ENCODE measurements at regions of chr1 and their contacts with region 1.

Region 1: DNA sequence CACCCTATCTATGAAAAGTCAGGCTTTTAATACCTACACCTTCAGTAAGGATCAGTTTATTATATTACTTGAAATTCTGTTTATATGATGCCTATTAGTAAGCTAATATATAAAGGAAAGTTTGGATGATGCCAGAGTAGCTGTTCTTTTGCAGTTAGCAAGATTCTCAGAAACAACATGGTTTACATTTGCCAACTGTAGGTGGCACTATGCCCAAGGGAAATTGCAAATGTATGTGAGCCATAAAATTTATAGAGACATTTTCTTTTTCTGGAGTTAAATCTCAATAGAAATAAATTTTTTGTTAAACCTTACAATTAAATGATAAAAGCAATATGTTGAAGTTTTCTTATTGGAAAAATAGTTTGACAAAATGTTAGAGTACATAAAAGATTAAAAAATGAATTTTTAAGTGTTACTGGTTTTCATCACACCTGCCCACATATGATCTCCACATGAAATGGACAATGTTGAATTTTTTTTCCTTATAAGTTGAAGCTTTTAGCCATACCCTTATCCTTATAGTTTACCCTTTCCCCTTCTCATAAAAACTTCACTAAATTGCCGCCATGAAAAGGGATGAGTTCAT is 32.1 kb upstream of the EPHX4 start:
- DNase-seq: peak; percentile 50
- H3K4me3 ChIP-seq: no peak overlapping the region
- H3K27ac ChIP-seq: no peak overlapping the region
- H3K27me3 ChIP-seq: no peaks in the 10 kb centered on the region
- CTCF ChIP-seq: peak; percentile 64

Region 2: GRCh38 chr1:91633438-91633837 is 364.3 kb before region 1 on chr1:
- in situ Hi-C with region 1: no loop called
- DNase-seq: no peak
- H3K4me3 ChIP-seq: no peak overlapping the region
- H3K27ac ChIP-seq: no peak overlapping the region
- H3K27me3 ChIP-seq: no peaks in the 10 kb centered on the region
- CTCF ChIP-seq: no peak

Region 3: DNA sequence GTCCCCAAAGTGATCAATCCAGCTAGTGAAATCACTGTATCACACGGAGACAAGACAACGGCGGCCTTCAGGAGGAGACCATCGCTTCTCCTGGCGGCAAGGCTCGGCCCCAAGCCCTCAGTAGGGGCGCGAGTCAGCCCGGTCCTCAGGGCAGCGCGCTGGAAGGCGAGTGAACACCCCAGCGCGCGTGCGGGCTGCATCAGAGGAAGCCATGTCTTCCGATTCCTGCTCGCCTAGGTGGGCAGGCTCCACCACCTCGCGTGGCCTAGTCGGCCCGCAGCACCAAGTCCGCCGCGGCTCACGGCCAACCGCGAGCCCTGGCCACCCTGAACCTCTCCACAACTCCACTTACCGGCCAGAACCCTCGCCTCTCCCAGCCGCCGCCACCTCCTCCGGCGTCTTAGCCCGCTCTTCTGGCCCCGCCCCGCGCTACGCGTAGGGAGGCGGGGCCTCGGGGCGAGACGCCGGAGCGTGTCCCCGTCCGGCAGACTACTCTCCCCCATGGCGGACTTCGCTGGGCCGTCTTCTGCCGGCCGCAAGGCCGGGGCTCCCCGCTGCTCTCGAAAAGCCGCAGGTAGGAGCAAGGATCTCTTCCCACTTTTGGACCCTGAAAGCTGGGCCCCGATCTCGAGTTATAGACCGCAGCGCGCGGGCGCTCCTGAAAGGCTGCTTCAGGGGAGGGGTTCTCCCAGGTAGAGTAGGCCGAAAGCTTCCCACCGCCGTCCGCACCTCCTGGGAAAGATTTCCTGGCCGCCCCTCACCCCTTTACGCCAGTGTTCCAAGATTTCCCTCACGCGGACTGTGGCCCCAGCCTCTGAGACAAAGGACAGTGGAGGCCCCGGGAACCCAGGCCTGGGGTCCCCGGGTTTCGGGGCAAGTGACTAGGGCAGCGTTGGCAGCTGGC is 301.1 kb after region 1 on chr1 and contains the starts of genes GLMN and RPAP2:
- in situ Hi-C with region 1: loop called (anchors 10 kb)
- DNase-seq: peak; percentile 55
- H3K4me3 ChIP-seq: peak within 1 kb of the TSS; percentile 84
- H3K27ac ChIP-seq: peak within 1 kb of the TSS; percentile 83
- H3K27me3 ChIP-seq: no peaks in the 10 kb centered on the region
- CTCF ChIP-seq: peak; percentile 39